GM18951 (cell line): ENCODE measurements at regions of chr3 and their contacts with region 1.

Region 1: DNA sequence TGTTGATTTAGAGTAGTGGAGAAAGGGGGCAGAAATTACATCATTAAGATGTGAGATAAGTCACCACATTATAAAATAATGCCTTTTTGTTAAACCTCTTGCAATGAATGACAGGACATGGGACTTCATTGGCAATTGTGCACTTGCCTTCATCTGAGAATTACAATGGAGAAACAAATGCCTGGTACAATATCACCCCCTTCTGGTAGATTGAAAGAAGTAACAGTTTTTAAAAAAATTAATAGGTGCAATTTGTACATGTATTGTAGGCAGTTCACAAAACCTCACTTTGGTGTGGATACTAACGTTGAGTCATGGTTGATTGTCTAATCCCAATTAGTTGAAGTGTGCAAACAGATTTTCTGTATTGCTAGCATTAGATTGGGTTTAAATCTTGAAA is 4.6 kb upstream of the P2RY14 start:
- POLR2A ChIP-seq: no peak

Region 2: DNA sequence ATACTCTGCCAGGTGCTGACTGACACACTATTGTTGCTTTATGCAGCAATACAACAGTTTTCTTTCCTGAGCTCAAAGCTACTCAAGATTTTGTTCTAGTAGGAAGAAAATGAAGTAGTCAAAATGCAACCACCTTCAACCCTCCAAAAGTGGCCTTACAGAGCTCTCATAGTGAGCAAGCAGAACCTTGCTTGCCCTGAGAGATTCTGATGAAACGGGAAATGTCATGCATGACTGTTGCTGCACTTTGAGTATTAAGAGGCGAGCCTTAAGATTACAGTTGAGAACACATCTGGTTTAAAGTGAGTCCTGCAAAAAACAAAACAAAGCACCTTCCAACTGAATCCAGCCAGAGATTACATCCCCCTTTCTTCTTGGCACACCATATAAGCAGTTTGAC is 407.4 kb before region 1 on chr3:
- in situ Hi-C with region 1: no loop called
- POLR2A ChIP-seq: no peak

Region 3: GRCh38 chr3:151168269-151169094 is 114.4 kb before region 1 on chr3:
- in situ Hi-C with region 1: loop called (anchors 5 kb)
- POLR2A ChIP-seq: no peak

Region 4: GRCh38 chr3:151553888-151554287 is 271.0 kb after region 1 on chr3:
- in situ Hi-C with region 1: no loop called
- POLR2A ChIP-seq: no peak

Region 5: GRCh38 chr3:151838583-151839312 is 555.8 kb after region 1 on chr3:
- in situ Hi-C with region 1: loop called (anchors 25 kb)
- POLR2A ChIP-seq: no peak